Activated CD8-positive, alpha-beta T cell treated with anti-CD3 and anti-CD28 coated beads for 36 hours (primary cell): ENCODE measurements at regions of chr2 and their contacts with region 1.

Region 1: DNA sequence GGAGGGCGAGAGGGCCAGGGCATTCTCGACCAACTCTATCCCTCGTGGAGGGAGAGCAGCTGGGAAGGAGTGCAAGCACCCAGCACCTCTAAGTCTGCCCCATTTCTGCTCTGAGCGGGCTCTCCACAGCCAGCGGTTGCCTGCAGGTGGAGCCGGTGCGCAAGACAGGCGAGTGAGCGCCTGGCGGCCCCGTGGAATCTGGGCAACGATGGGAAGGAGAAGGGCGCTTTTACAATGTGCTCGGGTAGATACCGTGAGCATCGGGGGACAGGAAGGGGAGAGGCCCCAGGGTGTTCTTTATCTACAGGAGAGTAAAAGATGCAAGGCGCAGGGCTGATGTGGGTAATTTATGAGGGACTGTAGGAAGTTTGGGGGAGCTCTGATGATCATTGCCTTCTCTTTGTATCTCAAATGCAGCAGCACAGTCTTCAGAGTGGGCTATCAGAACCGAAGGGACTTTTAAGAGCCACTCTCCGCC is 867 bp upstream of the TTL start:
- DNase-seq: peak; percentile 90
- ATAC-seq: peak; percentile 89
- H3K4me3 Mint-ChIP-seq: peak overlapping the region; percentile 84
- H3K27ac Mint-ChIP-seq: peak overlapping the region; percentile 87
- H3K4me1 Mint-ChIP-seq: peaks cover 27% of the 10 kb centered on the region
- H3K27me3 Mint-ChIP-seq: no peaks in the 10 kb centered on the region
- CTCF ChIP-seq: peak; percentile 81

Region 2: GRCh38 chr2:112239862-112240261 is 241.2 kb before region 1 on chr2:
- CTCF ChIA-PET with region 1: no interaction called
- POLR2A ChIA-PET with region 1: no interaction called
- intact Hi-C with region 1: no loop called
- DNase-seq: no peak
- ATAC-seq: no peak
- H3K4me3 Mint-ChIP-seq: no peak overlapping the region
- H3K27ac Mint-ChIP-seq: no peak overlapping the region
- H3K4me1 Mint-ChIP-seq: peaks cover 32% of the 10 kb centered on the region
- H3K27me3 Mint-ChIP-seq: no peaks in the 10 kb centered on the region
- CTCF ChIP-seq: no peak

Region 3: GRCh38 chr2:112542123-112542983 is 61.3 kb after region 1 on chr2 and contains the start of gene POLR1B:
- CTCF ChIA-PET with region 1: interaction called, 15 read pairs
- POLR2A ChIA-PET with region 1: interaction called, 4 read pairs
- intact Hi-C with region 1: loop called (anchors 10 kb)
- DNase-seq: peak; percentile 86
- ATAC-seq: peak; percentile 79
- H3K4me3 Mint-ChIP-seq: no peak within 1 kb of the TSS
- H3K27ac Mint-ChIP-seq: no peak within 1 kb of the TSS
- H3K4me1 Mint-ChIP-seq: peaks cover 25% of the 10 kb centered on the region
- H3K27me3 Mint-ChIP-seq: no peaks in the 10 kb centered on the region
- CTCF ChIP-seq: no peak
- total RNA-seq, gene POLR1B: 54.1 to 55.9 TPM

Region 4: GRCh38 chr2:112584134-112584890 is 103.2 kb after region 1 on chr2 and contains the start of gene CHCHD5:
- CTCF ChIA-PET with region 1: interaction called, 9 read pairs
- POLR2A ChIA-PET with region 1: interaction called, 5 read pairs
- intact Hi-C with region 1: loop called (anchors 5 kb)
- DNase-seq: peak; percentile 98
- ATAC-seq: peak; percentile 88
- H3K4me3 Mint-ChIP-seq: peak within 1 kb of the TSS; percentile 93
- H3K27ac Mint-ChIP-seq: peak within 1 kb of the TSS; percentile 99
- H3K4me1 Mint-ChIP-seq: peaks cover 31% of the 10 kb centered on the region
- H3K27me3 Mint-ChIP-seq: no peaks in the 10 kb centered on the region
- CTCF ChIP-seq: no peak
- total RNA-seq, gene CHCHD5: 34.8 to 37.5 TPM

Region 5: DNA sequence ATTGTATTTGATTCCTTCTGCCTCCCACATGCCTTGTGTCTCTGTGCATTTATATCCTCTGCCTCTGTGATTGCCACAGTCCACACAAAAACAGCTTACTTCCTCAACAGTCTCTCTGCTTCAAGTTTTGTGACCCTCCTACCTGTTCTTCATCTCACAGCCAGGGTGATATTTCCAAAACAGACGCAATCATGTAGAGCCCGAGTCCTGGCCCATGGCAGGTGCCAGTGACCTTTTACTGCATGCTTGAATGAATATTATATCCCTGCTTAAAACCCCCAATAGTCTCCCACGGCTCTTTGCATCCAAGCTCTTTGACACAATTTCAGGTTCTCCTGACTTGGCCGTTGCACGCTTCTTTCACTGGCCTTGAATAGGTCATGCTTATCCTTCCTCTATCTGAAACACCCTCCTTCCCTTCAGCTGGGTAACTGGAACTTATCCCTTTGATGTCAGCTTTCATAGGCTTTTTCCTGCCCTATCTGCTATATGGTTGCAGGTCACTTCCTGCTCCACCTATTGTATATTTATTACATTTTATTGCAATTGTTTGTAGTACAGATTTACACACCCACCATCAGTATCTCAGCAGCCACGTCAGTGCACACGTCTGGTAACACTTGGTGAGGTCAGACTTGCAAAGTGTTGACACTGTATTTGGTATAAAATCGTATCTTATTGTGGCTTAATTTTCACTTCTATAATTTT is 385.2 kb after region 1 on chr2:
- CTCF ChIA-PET with region 1: no interaction called
- POLR2A ChIA-PET with region 1: no interaction called
- intact Hi-C with region 1: no loop called
- DNase-seq: no peak
- ATAC-seq: no peak
- H3K4me3 Mint-ChIP-seq: no peak overlapping the region
- H3K27ac Mint-ChIP-seq: no peak overlapping the region
- H3K4me1 Mint-ChIP-seq: no peaks in the 10 kb centered on the region
- H3K27me3 Mint-ChIP-seq: peaks cover 18% of the 10 kb centered on the region
- CTCF ChIP-seq: no peak